ENCODE measurements at regions of chr22 and their contacts with region 1.

Region 1: DNA sequence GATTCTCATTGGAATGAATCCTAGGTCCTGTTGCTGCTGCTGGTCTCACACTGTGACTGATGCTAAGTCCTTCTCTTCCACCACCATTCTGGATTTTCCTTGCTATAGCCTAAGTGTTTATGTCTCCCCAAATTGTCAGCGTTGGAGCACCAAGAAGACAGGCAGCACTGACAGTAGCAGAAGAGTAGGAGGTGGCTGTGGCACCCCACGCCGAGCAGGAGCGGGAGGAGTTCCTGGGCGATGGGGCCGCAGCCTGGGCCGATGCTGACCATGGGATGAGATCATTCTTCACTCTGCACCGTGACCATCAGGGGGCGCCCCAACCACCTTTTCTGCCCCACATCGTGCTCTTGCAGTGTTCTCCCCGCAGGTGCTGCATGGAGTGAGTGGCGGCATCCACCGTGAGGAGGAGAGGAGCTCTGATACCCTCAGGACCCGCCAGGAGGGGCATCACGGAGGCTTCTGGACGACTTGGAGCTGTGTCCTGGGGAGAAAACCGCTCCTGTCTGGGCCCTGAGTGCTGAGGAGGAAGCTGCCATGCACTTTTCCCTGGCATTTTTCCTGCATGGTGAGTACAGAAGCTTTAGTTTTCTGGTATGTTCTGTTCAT is 57.0 kb downstream of the LRRC74B start:
- DNase-seq: peak in 1 of 2 donors; percentile 65
- H3K4me3 ChIP-seq: no peak overlapping the region
- H3K27ac ChIP-seq: no peak overlapping the region
- H3K4me1 ChIP-seq: no peaks in the 10 kb centered on the region
- H3K27me3 ChIP-seq: no peaks in the 10 kb centered on the region
- CTCF ChIP-seq: peak; percentile 46 to 70 (median 59)

Region 2: DNA sequence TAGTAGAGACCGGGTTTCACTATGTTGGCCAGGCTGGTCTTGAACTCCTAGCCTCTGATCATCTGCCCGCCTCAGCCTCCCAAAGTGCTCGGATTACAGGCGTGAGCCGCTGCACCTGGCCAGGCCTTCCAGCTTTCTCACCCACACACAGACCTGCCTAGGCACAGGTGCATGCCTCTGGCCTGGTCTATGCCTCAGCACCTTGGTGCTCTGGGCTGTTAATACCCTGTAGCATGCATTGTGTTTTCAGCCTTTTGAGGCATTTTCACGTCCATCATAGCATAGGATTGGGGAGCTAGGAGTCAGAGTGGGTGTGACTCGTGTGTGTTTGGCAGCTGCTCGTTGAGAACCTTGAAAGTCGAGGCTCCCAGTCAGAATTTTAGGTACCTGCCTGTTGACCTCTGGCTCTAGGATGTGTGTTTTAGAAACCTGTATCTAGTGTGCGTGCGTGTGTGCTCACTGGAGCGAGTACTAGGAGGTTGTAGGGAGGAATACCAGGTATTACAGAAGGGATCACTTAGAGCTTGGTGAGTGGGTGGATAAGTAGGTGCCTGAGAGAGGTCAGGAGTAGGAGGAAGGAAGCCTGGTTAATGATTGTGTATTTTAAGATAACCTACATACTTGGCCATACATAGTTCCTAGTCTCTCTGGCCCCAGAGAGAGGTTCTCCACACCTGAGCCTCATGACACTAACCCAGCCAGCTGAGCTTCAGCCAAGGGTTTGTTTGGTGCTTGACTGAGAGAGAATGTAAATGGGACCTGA is 165.6 kb before region 1 on chr22:
- intact Hi-C with region 1: no loop called
- DNase-seq: no peak
- H3K4me3 ChIP-seq: no peak overlapping the region
- H3K27ac ChIP-seq: no peak overlapping the region
- H3K4me1 ChIP-seq: peaks cover 5 to 18% of the 10 kb centered on the region in 2 donors
- H3K27me3 ChIP-seq: no peaks in the 10 kb centered on the region
- CTCF ChIP-seq: no peak

Region 3: DNA sequence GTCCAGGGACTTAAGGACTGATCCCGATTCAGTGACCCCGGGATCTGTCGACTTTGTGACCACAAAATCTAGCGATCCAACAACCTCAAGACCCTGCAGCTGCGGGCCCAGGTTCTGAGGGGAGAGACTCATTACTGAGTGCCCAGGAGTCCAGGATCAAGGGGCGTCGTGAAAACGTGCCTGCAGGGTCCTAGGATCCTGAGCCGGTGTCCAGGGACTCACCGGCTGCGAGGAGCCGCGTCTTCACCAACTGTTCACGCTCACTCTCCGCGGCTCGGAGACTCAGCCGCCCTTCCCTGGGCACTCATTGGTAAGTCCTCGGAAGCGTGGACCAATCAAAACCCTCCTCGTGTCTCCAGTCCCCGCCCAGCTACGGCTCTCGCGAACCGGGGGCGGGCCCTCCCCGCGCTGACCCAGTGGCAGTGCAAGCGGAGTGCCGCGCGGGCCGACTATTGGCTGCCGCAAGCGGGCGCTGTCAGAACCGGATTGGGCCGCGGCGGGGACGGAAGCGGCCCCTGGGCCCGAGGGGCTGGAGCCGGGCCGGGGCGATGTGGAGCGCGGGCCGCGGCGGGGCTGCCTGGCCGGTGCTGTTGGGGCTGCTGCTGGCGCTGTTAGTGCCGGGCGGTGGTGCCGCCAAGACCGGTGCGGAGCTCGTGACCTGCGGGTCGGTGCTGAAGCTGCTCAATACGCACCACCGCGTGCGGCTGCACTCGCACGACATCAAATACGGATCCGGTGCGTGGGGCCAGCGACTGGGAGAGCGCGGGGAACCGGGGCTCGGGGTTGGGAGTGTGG is 539.2 kb after region 1 on chr22 and contains the start of gene SDF2L1:
- intact Hi-C with region 1: loop called (anchors 10 kb)
- DNase-seq: peak; percentile 98 to 100
- H3K4me3 ChIP-seq: peak within 1 kb of the TSS; percentile 63 to 83
- H3K27ac ChIP-seq: peak within 1 kb of the TSS; percentile 69 to 80
- H3K4me1 ChIP-seq: peaks cover 0 to 14% of the 10 kb centered on the region in 2 donors
- H3K27me3 ChIP-seq: no peaks in the 10 kb centered on the region
- CTCF ChIP-seq: peak in 2 of 3 experiments; percentile 10 to 16
- total RNA-seq, gene SDF2L1: 37.4 TPM